Activated T-helper 2 cell treated with anti-CD3 and anti-CD28 coated beads, Interferon-gamma antibody, Interleukin-2, Interleukin-4, amounts not matched to agents 10 μg/mL and 5 μg/mL and 100 μg/mL, durations not matched to agents 14 hours and 24 hours and 36 hours (primary cell): ENCODE measurements at regions of chr12 and their contacts with region 1.

Region 1: DNA sequence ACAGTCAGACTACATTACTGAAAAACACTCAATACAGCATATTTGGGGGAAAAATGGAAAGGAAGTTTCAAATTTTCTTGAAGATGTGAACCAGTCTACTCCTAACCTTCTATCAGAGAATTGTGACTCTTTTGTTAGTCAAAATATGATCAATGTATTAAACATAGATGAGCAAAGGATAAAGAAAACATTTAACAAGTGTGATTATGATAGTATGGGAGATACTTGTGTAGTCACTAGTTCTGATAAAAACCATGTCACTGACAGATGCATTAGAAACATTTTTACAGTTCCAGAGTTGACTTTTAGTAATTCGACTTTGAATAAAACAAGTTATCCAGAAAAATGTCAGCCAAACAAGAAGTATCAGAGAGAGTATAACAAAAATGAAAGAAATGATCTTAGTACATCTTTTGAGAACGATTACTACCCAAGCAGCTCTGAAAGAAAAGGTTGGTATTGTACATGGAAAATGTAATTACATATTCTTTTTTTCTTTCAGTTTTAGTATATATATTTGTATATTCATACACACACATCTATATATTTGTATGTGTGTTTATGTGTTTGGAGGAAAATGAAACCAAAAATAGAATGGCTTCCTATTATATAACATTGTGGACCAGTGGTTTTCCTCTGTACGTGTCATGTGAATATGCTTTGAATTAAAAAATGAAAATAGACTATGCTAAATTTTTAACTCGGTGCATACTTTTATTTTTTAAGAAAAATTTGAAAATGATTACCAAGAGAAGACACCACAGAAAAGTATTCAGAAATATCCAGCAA is 63.3 kb upstream of the ABCD2 start:
- DNase-seq: no peak
- H3K4me3 Mint-ChIP-seq: peak overlapping the region; percentile 69
- H3K27ac Mint-ChIP-seq: peak overlapping the region; percentile 70
- H3K4me1 Mint-ChIP-seq: peaks cover 39% of the 10 kb centered on the region
- H3K27me3 Mint-ChIP-seq: no peaks in the 10 kb centered on the region

Region 2: GRCh38 chr12:39116867-39117266 is 566.0 kb before region 1 on chr12:
- intact Hi-C with region 1: no loop called
- DNase-seq: no peak
- H3K4me3 Mint-ChIP-seq: no peak overlapping the region
- H3K27ac Mint-ChIP-seq: no peak overlapping the region
- H3K4me1 Mint-ChIP-seq: no peaks in the 10 kb centered on the region
- H3K27me3 Mint-ChIP-seq: no peaks in the 10 kb centered on the region

Region 3: DNA sequence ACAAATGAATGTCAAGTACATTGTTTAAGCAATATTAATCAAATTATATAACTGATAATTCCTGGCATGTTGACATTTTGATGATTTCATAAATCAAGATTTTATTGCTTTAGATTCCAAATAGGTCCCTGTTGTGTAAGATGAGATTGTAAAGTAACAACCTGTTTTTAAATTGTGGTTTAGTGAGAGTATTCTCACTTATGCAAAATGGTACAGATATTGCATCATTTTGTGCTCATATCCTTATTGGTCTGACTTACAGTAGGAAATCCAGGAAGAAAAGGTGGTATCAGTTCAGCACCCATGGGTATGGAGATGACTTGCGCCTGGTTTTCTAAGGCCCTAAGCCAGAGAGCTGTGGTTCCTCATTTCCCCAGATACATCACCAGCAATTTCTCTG is 405.5 kb before region 1 on chr12:
- intact Hi-C with region 1: no loop called
- DNase-seq: no peak
- H3K4me3 Mint-ChIP-seq: no peak overlapping the region
- H3K27ac Mint-ChIP-seq: no peak overlapping the region
- H3K4me1 Mint-ChIP-seq: peaks cover 6% of the 10 kb centered on the region
- H3K27me3 Mint-ChIP-seq: peaks cover 23% of the 10 kb centered on the region

Region 4: DNA sequence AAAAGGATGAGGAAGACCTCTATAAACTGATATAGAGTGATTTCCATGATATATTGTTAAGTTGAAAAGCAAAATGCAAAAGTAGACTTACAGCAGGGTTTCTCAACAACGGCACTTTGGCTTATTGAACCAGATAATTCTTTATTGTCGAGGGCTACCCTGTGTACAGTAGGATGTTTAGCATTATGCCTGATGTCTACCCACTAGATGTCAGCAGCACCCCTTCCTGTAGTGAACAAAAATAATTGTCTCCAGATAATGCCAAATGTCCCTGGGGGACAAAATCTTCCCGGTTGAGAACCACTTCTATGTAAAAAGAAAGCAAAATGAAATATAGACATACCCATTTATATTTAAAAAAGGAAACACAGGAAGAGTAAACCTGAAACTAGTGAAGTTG is 95.7 kb before region 1 on chr12:
- intact Hi-C with region 1: no loop called
- DNase-seq: no peak
- H3K4me3 Mint-ChIP-seq: no peak overlapping the region
- H3K27ac Mint-ChIP-seq: no peak overlapping the region
- H3K4me1 Mint-ChIP-seq: peaks cover 11% of the 10 kb centered on the region
- H3K27me3 Mint-ChIP-seq: no peaks in the 10 kb centered on the region

Region 5: GRCh38 chr12:39628836-39629235 is 54.0 kb before region 1 on chr12:
- intact Hi-C with region 1: loop called (anchors 2 kb)
- DNase-seq: no peak
- H3K4me3 Mint-ChIP-seq: peak overlapping the region; percentile 66
- H3K27ac Mint-ChIP-seq: peak overlapping the region; percentile 92
- H3K4me1 Mint-ChIP-seq: peaks cover 39% of the 10 kb centered on the region
- H3K27me3 Mint-ChIP-seq: no peaks in the 10 kb centered on the region

Region 6: GRCh38 chr12:39763071-39763889 is 80.4 kb after region 1 on chr12:
- intact Hi-C with region 1: no loop called
- DNase-seq: no peak
- H3K4me3 Mint-ChIP-seq: no peak overlapping the region
- H3K27ac Mint-ChIP-seq: no peak overlapping the region
- H3K4me1 Mint-ChIP-seq: no peaks in the 10 kb centered on the region
- H3K27me3 Mint-ChIP-seq: no peaks in the 10 kb centered on the region